Activated naive CD4-positive, alpha-beta T cell treated with anti-CD3 and anti-CD28 coated beads, Interleukin-2, amount 10 ng/mL, durations not matched to agents 7 days and 5 days (primary cell): ENCODE measurements at regions of chr12 and their contacts with region 1.

Region 1: DNA sequence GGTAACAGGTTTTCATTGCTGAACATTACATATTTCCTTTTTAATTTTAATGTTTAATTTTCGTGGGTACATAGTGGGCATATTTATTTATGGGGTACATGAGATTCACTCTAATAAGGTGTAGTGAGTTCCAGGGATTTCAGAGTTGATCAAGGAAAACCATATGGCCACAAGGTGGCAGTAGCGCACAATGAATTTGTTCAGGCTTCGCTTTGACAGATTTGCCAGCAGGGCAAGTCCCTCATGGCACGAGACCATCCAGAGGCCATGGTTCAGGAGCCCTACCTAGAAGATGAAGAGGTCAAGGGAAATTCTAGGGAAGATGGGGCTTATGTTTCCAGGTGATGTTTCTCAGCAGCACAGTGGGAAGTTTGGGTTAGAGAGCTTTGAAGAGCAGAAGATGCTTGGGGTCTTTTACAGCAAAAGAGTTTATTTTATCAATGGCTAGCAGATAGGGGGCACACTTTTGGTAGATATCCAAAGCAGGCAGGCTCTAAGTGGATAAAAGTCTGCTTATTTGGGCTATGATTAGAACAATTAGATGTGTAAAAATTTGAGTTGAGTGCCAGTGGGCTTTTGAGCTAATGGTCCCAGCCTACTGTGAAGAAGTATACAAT is 1004.4 kb downstream of the AACS start:
- DNase-seq: peak; percentile 67
- H3K4me3 Mint-ChIP-seq: no peak overlapping the region
- H3K27ac Mint-ChIP-seq: no peak overlapping the region
- H3K4me1 Mint-ChIP-seq: no peaks in the 10 kb centered on the region
- H3K27me3 Mint-ChIP-seq: no peaks in the 10 kb centered on the region

Region 2: GRCh38 chr12:126019385-126019784 is 50.3 kb before region 1 on chr12:
- CTCF ChIA-PET with region 1: no interaction called
- DNase-seq: no peak
- H3K4me3 Mint-ChIP-seq: no peak overlapping the region
- H3K27ac Mint-ChIP-seq: no peak overlapping the region
- H3K4me1 Mint-ChIP-seq: no peaks in the 10 kb centered on the region
- H3K27me3 Mint-ChIP-seq: no peaks in the 10 kb centered on the region

Region 3: DNA sequence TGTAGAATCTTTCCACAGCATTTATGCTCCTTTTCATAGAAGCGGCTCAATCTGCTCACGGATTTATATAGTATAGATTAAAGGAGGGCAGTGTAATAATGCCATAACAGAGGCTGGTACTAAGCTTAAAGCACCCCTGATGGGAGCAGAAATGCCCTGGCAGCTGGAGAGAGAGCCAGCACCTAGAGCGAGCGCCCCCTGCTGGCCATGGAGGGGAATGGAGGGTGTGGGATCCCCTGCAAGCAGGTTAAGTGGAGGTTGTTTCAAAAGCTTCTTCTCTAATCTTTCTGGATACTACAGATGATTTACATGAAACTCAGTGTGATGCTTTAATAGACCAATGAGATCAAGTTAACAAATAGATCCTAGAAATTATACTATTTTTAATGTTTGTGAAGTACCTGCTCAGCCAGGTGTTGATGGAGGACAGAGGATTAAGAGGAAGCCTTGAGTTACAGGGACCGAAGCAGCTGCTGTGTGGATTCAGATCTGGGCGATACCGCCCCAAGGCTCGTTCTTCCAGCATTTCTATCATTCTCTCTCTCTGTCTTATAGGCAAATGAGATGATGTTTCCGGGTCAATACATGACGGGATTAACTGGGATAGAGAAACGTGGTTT is 678.0 kb after region 1 on chr12:
- CTCF ChIA-PET with region 1: interaction called, 17 read pairs
- DNase-seq: peak; percentile 60
- H3K4me3 Mint-ChIP-seq: no peak overlapping the region
- H3K27ac Mint-ChIP-seq: no peak overlapping the region
- H3K4me1 Mint-ChIP-seq: no peaks in the 10 kb centered on the region
- H3K27me3 Mint-ChIP-seq: no peaks in the 10 kb centered on the region

Region 4: GRCh38 chr12:126874427-126875026 is 804.9 kb after region 1 on chr12:
- CTCF ChIA-PET with region 1: interaction called, 11 read pairs
- DNase-seq: peak; percentile 61
- H3K4me3 Mint-ChIP-seq: no peak overlapping the region
- H3K27ac Mint-ChIP-seq: no peak overlapping the region
- H3K4me1 Mint-ChIP-seq: no peaks in the 10 kb centered on the region
- H3K27me3 Mint-ChIP-seq: no peaks in the 10 kb centered on the region